ENCODE measurements at regions of chr3 and their contacts with region 1.

Region 1: GRCh38 chr3:186849374-186849975 is 7.0 kb downstream of the ADIPOQ start:
- DNase-seq: peak; percentile 63 to 76 (median 72)
- H3K4me3 ChIP-seq: no peak overlapping the region
- H3K27ac ChIP-seq: no peak overlapping the region
- H3K4me1 ChIP-seq: peaks cover 0 to 4% (median 0%) of the 10 kb centered on the region in 4 experiments
- H3K27me3 ChIP-seq: no peaks in the 10 kb centered on the region

Region 2: GRCh38 chr3:186732169-186732766 is 117.2 kb before region 1 on chr3:
- CTCF ChIA-PET with region 1: no interaction called
- POLR2A ChIA-PET with region 1: no interaction called
- DNase-seq: no peak
- H3K4me3 ChIP-seq: no peak overlapping the region
- H3K27ac ChIP-seq: no peak overlapping the region
- H3K4me1 ChIP-seq: no peaks in the 10 kb centered on the region
- H3K27me3 ChIP-seq: no peaks in the 10 kb centered on the region

Region 3: GRCh38 chr3:186920301-186920700 is 70.8 kb after region 1 on chr3:
- CTCF ChIA-PET with region 1: interaction called, 13 read pairs
- POLR2A ChIA-PET with region 1: interaction called, 3 read pairs
- DNase-seq: no peak
- H3K4me3 ChIP-seq: no peak overlapping the region
- H3K27ac ChIP-seq: no peak overlapping the region
- H3K4me1 ChIP-seq: peaks cover 6 to 32% (median 14%) of the 10 kb centered on the region in 4 experiments
- H3K27me3 ChIP-seq: no peaks in the 10 kb centered on the region

Region 4: GRCh38 chr3:186930641-186931531 is 81.4 kb after region 1 on chr3:
- CTCF ChIA-PET with region 1: interaction called, 63 read pairs
- POLR2A ChIA-PET with region 1: interaction called, 6 read pairs
- DNase-seq: peak; percentile 89 to 95 (median 93)
- H3K4me3 ChIP-seq: peak overlapping the region; percentile 72 to 98 (median 89)
- H3K27ac ChIP-seq: peak overlapping the region; percentile 76 to 87
- H3K4me1 ChIP-seq: peaks cover 15 to 41% (median 37%) of the 10 kb centered on the region in 4 experiments
- H3K27me3 ChIP-seq: no peaks in the 10 kb centered on the region

Region 5: GRCh38 chr3:186959029-186959624 is 109.7 kb after region 1 on chr3:
- CTCF ChIA-PET with region 1: interaction called, 14 read pairs
- POLR2A ChIA-PET with region 1: no interaction called
- DNase-seq: peak in 2 of 3 donors; percentile 45 to 48
- H3K4me3 ChIP-seq: no peak overlapping the region
- H3K27ac ChIP-seq: no peak overlapping the region
- H3K4me1 ChIP-seq: peaks cover 3 to 12% (median 9%) of the 10 kb centered on the region in 4 experiments
- H3K27me3 ChIP-seq: no peaks in the 10 kb centered on the region

Region 6: GRCh38 chr3:187164885-187165543 is 315.5 kb after region 1 on chr3:
- CTCF ChIA-PET with region 1: interaction called, 23 read pairs
- POLR2A ChIA-PET with region 1: interaction called, 3 read pairs
- DNase-seq: peak; percentile 70 to 88 (median 78)
- H3K4me3 ChIP-seq: no peak overlapping the region
- H3K27ac ChIP-seq: no peak overlapping the region
- H3K4me1 ChIP-seq: peaks cover 0 to under 1% (median 0%) of the 10 kb centered on the region in 4 experiments
- H3K27me3 ChIP-seq: no peaks in the 10 kb centered on the region

Measured in common myeloid progenitor, CD34-positive (primary cell).